Posterior vena cava (tissue), 2 donors: ENCODE measurements at regions of chr1 and their contacts with region 1.

Region 1: DNA sequence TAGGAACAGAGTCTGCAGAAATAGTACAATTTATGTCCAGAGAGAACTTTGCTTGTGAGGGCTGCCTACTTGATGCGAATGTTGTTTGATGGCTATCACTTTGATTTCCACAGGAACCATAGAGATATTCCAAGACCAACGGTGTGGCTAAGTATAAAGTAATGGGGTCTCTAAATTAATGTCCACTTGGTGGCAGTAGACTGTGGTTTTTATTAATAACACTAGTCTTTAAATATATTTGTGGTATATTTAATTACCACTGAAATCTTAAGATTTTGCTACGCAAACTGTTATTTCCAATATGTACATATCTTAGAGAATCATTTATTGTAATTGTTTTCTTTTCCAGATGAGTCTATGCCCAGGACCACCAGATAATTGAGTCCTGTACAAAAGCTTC is 647.9 kb downstream of the PLA2G4A start:
- DNase-seq: no peak

Region 2: GRCh38 chr1:187516874-187517273 is 40.2 kb after region 1 on chr1:
- intact Hi-C with region 1: loop called in 1 of 2 experiments (anchors 2 kb)
- DNase-seq: no peak